GM10248 (cell line): ENCODE measurements at regions of chr1 and their contacts with region 1.

Region 1: GRCh38 chr1:45730475-45731339 is 19.7 kb downstream of the IPP start:
- DNase-seq: no peak
- CTCF ChIP-seq: no peak

Region 2: GRCh38 chr1:45607404-45608074 is 123.2 kb before region 1 on chr1:
- CTCF ChIA-PET with region 1: no interaction called
- POLR2A ChIA-PET with region 1: no interaction called
- DNase-seq: no peak
- CTCF ChIP-seq: no peak

Region 3: GRCh38 chr1:45679123-45679522 is 51.6 kb before region 1 on chr1:
- CTCF ChIA-PET with region 1: no interaction called
- POLR2A ChIA-PET with region 1: interaction called, 10 read pairs
- DNase-seq: no peak
- CTCF ChIP-seq: no peak

Region 4: GRCh38 chr1:45765999-45766792 is 35.5 kb after region 1 on chr1:
- CTCF ChIA-PET with region 1: no interaction called
- POLR2A ChIA-PET with region 1: no interaction called
- DNase-seq: no peak
- CTCF ChIP-seq: no peak